B cell (primary cell): ENCODE measurements at regions of chr16 and their contacts with region 1.

Region 1: GRCh38 chr16:75198135-75198600 is 8.8 kb downstream of the CTRB2 start:
- DNase-seq: no peak
- ATAC-seq: no peak
- H3K4me3 ChIP-seq: no peak overlapping the region
- H3K4me3 Mint-ChIP-seq: no peak overlapping the region
- H3K27ac ChIP-seq: no peak overlapping the region
- H3K27ac Mint-ChIP-seq: no peak overlapping the region
- H3K4me1 ChIP-seq: peaks cover 11 to 12% of the 10 kb centered on the region in 2 donors
- H3K4me1 Mint-ChIP-seq: peaks cover 10% of the 10 kb centered on the region
- H3K27me3 ChIP-seq: peaks cover 0 to 54% (median 12%) of the 10 kb centered on the region in 4 experiments
- H3K27me3 Mint-ChIP-seq: peaks cover 37% of the 10 kb centered on the region
- CTCF ChIP-seq: no peak

Region 2: DNA sequence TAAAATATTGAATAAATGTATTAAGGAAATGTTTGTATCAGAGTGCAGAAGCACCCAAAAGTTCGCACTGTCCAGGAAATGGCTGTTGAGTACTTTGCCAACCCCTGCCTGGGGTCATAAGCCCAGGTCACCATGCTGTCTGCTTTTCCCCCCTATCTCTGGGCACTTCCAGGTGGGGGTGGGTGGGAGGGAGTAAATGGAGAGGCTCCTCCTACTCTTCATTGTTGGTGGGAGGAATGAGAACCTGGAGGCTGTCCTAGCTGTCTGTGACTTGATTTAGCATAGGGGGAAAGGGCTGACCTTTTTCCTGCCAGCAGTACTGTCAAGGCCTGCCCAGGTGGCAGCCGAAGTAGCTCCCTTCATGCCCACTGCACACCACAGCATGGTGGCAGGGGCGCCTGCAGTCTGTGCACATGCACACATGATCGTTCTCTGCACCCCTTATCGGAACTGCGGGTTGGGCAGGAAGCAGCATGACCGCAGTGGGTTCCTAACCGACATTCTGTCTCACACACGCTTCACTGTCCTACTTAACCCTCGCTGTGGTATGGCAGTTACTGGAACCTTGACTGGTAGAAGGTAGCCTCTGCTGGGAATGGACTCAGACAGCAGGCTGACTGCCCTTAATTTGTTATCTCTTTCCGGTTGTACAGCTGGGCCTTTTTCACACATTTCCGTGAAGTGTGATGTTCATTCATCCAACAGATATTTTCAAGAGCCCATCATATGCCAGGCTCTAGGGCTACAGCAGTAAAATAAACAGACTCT is 123.1 kb before region 1 on chr16:
- CTCF ChIA-PET with region 1: no interaction called
- POLR2A ChIA-PET with region 1: no interaction called
- intact Hi-C with region 1: no loop called
- DNase-seq: peak; percentile 83
- ATAC-seq: peak; percentile 93
- H3K4me3 ChIP-seq: peak overlapping the region in 1 of 5 experiments; percentile 38
- H3K4me3 Mint-ChIP-seq: peak overlapping the region; percentile 20
- H3K27ac ChIP-seq: no peak overlapping the region
- H3K27ac Mint-ChIP-seq: peak overlapping the region; percentile 42
- H3K4me1 ChIP-seq: peaks cover 31 to 37% of the 10 kb centered on the region in 2 donors
- H3K4me1 Mint-ChIP-seq: peaks cover 36% of the 10 kb centered on the region
- H3K27me3 ChIP-seq: peaks cover 0 to 55% (median 16%) of the 10 kb centered on the region in 4 experiments
- H3K27me3 Mint-ChIP-seq: peaks cover 36% of the 10 kb centered on the region
- CTCF ChIP-seq: no peak

Region 3: DNA sequence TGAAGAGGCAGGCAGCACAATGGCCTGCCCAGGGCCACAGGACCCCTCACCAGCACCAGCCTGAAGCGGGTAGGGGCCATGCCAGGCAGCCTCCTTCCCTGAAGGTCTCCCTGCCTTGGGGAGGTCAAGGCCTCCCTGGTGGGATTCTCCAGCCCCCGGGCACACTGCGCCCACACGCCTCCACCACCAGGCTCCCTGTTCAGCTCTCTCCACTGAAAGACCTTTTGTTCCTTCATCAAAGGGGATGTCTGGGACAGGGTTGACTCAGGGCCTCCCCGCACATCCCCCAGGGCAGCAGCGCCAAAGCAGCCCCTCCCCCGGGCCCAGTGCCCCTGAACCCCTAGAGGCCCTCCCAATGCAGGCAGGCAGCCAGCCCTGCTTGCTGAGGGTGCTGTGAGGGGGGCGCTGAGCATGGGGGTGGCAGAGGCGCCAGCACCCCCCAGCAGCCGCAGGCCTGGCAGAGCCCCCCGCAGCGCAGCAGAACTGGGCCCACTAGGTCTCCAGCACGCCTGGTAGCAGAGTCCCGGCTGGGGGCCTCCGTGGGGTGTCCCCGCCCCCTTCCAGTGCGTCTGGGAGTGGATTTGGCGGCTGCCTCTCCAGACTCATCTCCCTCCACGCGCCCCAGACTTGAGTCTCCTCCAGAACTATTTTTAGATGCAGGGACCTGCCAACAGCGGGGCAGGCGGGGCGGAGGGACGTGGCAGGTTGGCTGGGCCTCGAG is 40.1 kb after region 1 on chr16:
- CTCF ChIA-PET with region 1: interaction called, 34 read pairs
- POLR2A ChIA-PET with region 1: no interaction called
- intact Hi-C with region 1: loop called (anchors 5 kb)
- DNase-seq: no peak
- ATAC-seq: no peak
- H3K4me3 ChIP-seq: no peak overlapping the region
- H3K4me3 Mint-ChIP-seq: no peak overlapping the region
- H3K27ac ChIP-seq: no peak overlapping the region
- H3K27ac Mint-ChIP-seq: no peak overlapping the region
- H3K4me1 ChIP-seq: peaks cover 0 to 7% of the 10 kb centered on the region in 2 donors
- H3K4me1 Mint-ChIP-seq: peaks cover 2% of the 10 kb centered on the region
- H3K27me3 ChIP-seq: peaks cover 0 to 89% (median 16%) of the 10 kb centered on the region in 4 experiments
- H3K27me3 Mint-ChIP-seq: peaks cover 59% of the 10 kb centered on the region
- CTCF ChIP-seq: no peak

Region 4: DNA sequence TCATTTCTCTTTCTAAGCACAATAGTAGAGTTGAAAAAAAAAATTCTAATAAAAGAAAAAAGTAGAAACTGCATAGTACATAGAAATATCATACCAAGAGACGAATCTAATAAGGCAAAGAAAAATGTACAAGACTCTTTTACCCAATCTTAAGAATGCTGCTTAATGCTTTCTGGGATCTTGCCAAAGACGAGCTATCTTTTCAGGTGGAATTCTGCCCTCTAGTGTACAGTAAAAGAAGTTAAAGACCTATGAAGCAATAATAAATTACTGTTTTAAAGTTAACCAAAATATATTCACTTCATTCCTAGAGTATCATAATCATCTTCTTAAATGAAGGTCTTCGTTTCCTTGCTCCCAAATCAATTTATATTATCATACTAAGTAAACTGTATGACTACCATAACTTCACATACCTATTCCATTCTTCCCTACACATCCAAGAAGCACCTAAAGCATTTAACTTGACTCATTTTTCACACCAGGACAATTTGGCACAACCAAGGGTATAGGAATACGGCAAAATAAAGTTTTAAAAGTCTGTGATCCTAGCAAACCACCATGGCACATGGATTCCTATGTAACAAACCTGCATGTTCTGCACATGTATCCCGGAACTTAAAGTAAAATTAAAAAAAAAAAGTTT is 187.5 kb after region 1 on chr16:
- CTCF ChIA-PET with region 1: interaction called, 65 read pairs
- POLR2A ChIA-PET with region 1: interaction called, 3 read pairs
- intact Hi-C with region 1: loop called (anchors 1 kb)
- DNase-seq: peak; percentile 74
- ATAC-seq: peak; percentile 39
- H3K4me3 ChIP-seq: no peak overlapping the region
- H3K4me3 Mint-ChIP-seq: no peak overlapping the region
- H3K27ac ChIP-seq: no peak overlapping the region
- H3K27ac Mint-ChIP-seq: no peak overlapping the region
- H3K4me1 ChIP-seq: peaks cover 10 to 17% of the 10 kb centered on the region in 2 donors
- H3K4me1 Mint-ChIP-seq: peaks cover 8% of the 10 kb centered on the region
- H3K27me3 ChIP-seq: peaks cover 4 to 40% (median 35%) of the 10 kb centered on the region in 4 experiments
- H3K27me3 Mint-ChIP-seq: peaks cover 37% of the 10 kb centered on the region
- CTCF ChIP-seq: peak; percentile 83

Region 5: DNA sequence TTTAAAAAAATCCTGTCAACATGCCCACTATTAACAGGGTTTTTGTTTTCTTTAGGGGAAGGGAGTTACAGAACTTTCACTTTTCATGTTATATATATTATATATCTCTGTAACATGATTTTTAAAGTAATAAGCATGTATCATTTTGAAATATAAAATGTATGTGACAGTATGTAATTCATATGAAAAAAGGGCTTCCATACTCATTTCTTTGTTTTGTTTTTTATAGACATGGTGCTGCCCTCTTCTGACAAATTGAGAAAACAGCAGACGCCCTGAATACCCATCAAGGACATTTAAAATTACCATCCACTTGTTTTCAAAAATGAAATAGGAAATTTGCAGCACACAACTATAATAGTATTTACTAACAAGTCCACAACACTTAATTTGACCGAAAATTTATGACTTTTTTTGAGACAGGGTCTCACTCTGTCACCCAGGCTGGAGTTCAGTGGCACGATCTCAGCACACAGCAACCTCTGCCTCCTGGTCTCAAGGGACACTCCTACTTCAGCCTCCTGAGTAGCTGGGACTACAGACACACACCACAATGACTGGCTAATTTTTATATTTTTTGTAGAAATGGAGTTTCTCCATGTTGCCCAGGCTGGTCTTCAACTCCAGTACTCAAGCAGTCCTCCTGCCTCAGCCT is 204.8 kb after region 1 on chr16:
- CTCF ChIA-PET with region 1: interaction called, 96 read pairs
- POLR2A ChIA-PET with region 1: no interaction called
- intact Hi-C with region 1: loop called (anchors 1 kb)
- DNase-seq: peak; percentile 50
- ATAC-seq: no peak
- H3K4me3 ChIP-seq: no peak overlapping the region
- H3K4me3 Mint-ChIP-seq: no peak overlapping the region
- H3K27ac ChIP-seq: no peak overlapping the region
- H3K27ac Mint-ChIP-seq: no peak overlapping the region
- H3K4me1 ChIP-seq: no peaks in the 10 kb centered on the region
- H3K4me1 Mint-ChIP-seq: no peaks in the 10 kb centered on the region
- H3K27me3 ChIP-seq: no peaks in the 10 kb centered on the region
- H3K27me3 Mint-ChIP-seq: no peaks in the 10 kb centered on the region
- CTCF ChIP-seq: peak; percentile 81

Region 6: DNA sequence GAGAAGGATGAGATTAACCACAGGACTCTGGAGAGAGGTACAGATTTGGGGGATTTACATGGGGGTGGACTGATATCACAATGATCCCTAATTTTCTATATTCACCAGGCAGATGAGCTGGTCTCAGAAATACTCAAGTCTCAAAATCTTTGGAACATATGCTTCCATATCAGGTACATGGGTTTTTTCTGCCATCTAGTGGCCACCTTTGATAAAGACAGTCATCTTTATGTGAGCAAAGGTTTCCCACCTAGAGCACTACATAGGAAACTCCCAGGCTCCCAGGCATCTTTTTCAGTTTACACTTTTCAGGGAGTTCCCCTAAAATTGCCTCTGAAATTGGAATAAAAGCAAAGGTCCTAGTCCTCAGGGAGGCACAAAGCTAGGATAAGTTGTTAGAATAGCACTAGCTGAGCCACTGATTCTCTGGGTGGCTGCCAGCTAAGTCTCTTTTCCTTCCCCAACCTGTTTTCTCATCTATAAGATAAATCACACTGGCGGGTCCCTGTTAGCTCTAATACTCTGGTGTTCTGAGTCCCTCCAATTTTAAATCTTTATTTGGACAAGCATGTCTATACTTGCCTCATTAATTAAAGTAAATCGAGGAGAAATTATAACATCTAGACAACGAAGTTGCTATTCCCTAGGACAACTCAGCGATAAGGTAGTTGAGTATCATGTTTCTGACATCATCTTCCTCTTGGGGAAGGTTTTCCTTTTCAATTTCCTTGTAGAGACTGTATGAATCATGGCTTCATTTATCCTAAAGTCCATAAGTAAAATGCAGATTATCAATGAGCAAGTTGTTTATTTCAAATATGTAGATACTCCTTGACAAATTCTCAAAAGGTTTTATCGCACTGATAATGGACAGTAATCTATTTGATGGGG is 1973.8 kb after region 1 on chr16:
- CTCF ChIA-PET with region 1: interaction called, 48 read pairs
- POLR2A ChIA-PET with region 1: no interaction called
- intact Hi-C with region 1: no loop called
- DNase-seq: peak; percentile 65
- ATAC-seq: peak; percentile 53
- H3K4me3 ChIP-seq: no peak overlapping the region
- H3K4me3 Mint-ChIP-seq: no peak overlapping the region
- H3K27ac ChIP-seq: no peak overlapping the region
- H3K27ac Mint-ChIP-seq: no peak overlapping the region
- H3K4me1 ChIP-seq: no peaks in the 10 kb centered on the region
- H3K4me1 Mint-ChIP-seq: no peaks in the 10 kb centered on the region
- H3K27me3 ChIP-seq: peaks cover 0 to 21% (median 13%) of the 10 kb centered on the region in 4 experiments
- H3K27me3 Mint-ChIP-seq: peaks cover 60% of the 10 kb centered on the region
- CTCF ChIP-seq: peak; percentile 86